Activated CD8-positive, alpha-beta T cell treated with anti-CD3 and anti-CD28 coated beads for 36 hours (primary cell): ENCODE measurements at regions of chr4 and their contacts with region 1.

Region 1: DNA sequence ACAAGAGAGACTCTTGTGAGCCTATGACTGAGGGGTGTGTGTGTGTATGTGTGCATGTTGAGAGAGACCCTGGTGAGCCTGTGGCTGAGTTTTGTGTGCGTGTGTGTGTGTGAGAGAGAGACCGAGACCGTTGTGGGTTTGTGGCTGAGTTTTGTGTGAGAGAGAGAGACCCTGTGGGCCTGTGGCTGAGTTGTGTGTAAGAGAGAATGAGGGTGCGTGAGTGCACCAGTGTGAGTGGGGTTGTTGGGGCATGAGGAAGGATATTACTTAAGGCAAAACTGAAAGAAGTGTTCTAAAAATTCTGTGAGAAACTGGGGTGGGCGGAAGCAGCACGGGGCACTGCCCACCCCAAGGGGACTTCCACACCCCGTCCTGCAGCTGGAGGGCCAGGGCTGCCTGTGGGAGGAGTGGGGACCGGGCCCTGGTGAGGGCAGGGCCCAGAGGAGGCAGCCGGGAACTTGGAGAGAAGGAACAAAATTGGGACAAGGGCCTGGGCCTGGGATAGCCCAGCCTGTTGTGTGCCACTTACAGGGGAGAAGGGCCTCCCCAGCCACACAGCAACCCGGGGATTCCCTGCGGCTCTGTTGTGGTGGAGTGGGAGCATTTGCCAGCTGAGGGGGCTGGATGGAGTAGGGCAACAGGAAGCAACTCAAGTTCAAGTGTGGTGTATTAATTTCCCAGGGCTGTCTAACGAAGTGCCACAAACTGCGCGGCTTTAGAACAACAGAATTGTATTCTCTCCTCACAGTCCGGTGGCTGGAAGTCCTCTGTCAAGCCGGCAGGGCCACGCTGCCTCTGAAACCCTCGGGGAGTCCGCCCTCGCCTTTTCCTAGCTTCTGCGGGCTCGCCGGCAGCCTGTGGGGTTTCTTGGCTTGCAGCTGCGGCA is 22.1 kb downstream of the TMEM131L start:
- DNase-seq: peak; percentile 91
- ATAC-seq: peak; percentile 64
- H3K4me3 Mint-ChIP-seq: peak overlapping the region; percentile 69
- H3K27ac Mint-ChIP-seq: peak overlapping the region; percentile 95
- H3K4me1 Mint-ChIP-seq: peaks cover 64% of the 10 kb centered on the region
- H3K27me3 Mint-ChIP-seq: no peaks in the 10 kb centered on the region
- CTCF ChIP-seq: no peak

Region 2: GRCh38 chr4:153257151-153257620 is 231.1 kb before region 1 on chr4:
- CTCF ChIA-PET with region 1: no interaction called
- POLR2A ChIA-PET with region 1: no interaction called
- intact Hi-C with region 1: no loop called
- DNase-seq: peak; percentile 61
- ATAC-seq: peak; percentile 58
- H3K4me3 Mint-ChIP-seq: no peak overlapping the region
- H3K27ac Mint-ChIP-seq: no peak overlapping the region
- H3K4me1 Mint-ChIP-seq: no peaks in the 10 kb centered on the region
- H3K27me3 Mint-ChIP-seq: peaks cover 8% of the 10 kb centered on the region
- CTCF ChIP-seq: no peak

Region 3: GRCh38 chr4:153432968-153433753 is 55.1 kb before region 1 on chr4:
- CTCF ChIA-PET with region 1: interaction called, 6 read pairs
- POLR2A ChIA-PET with region 1: interaction called, 4 read pairs
- intact Hi-C with region 1: loop called (anchors 5 kb)
- DNase-seq: peak; percentile 91
- ATAC-seq: peak; percentile 86
- H3K4me3 Mint-ChIP-seq: peak overlapping the region; percentile 80
- H3K27ac Mint-ChIP-seq: peak overlapping the region; percentile 97
- H3K4me1 Mint-ChIP-seq: peaks cover 72% of the 10 kb centered on the region
- H3K27me3 Mint-ChIP-seq: no peaks in the 10 kb centered on the region
- CTCF ChIP-seq: peak; percentile 82

Region 4: GRCh38 chr4:153497988-153498967 is 10.0 kb after region 1 on chr4:
- CTCF ChIA-PET with region 1: interaction called, 6 read pairs
- POLR2A ChIA-PET with region 1: interaction called, 26 read pairs
- intact Hi-C with region 1: loop called (anchors 1 kb)
- DNase-seq: peak; percentile 43
- ATAC-seq: peak; percentile 21
- H3K4me3 Mint-ChIP-seq: peak overlapping the region; percentile 75
- H3K27ac Mint-ChIP-seq: peak overlapping the region; percentile 97
- H3K4me1 Mint-ChIP-seq: peaks cover 92% of the 10 kb centered on the region
- H3K27me3 Mint-ChIP-seq: no peaks in the 10 kb centered on the region
- CTCF ChIP-seq: no peak

Region 5: GRCh38 chr4:153535772-153536513 is 47.7 kb after region 1 on chr4:
- CTCF ChIA-PET with region 1: interaction called, 9 read pairs
- POLR2A ChIA-PET with region 1: interaction called, 16 read pairs
- intact Hi-C with region 1: no loop called
- DNase-seq: no peak
- ATAC-seq: no peak
- H3K4me3 Mint-ChIP-seq: no peak overlapping the region
- H3K27ac Mint-ChIP-seq: peak overlapping the region; percentile 83
- H3K4me1 Mint-ChIP-seq: peaks cover 80% of the 10 kb centered on the region
- H3K27me3 Mint-ChIP-seq: no peaks in the 10 kb centered on the region
- CTCF ChIP-seq: no peak

Region 6: DNA sequence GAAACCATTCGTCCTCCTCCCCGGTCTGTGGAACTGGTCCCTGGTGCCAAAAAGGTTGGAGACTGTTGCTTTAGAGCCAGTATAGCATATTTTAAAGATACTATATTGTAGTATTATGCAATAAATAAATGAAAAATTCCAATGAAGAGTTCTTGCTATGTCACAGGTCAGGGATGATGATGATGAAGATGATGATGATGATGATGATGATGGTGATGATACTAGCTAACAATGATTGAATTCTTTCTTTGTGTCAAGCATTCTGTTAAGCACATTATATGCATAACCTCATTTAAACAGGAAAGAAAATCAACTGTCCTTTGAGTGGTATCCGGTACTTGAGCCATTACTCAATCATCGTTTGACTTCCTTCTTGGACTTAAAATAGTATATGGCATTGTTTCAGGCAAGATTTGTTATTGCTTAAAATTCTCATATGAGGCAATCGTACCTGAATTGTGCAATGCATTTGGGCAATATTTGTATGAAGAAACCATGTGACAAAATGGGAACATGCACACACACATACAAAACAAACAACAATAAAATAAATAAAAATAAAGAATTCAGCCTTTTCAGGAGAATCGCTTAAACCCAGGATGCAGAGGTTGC is 173.1 kb after region 1 on chr4:
- CTCF ChIA-PET with region 1: no interaction called
- POLR2A ChIA-PET with region 1: no interaction called
- intact Hi-C with region 1: no loop called
- DNase-seq: no peak
- ATAC-seq: no peak
- H3K4me3 Mint-ChIP-seq: no peak overlapping the region
- H3K27ac Mint-ChIP-seq: no peak overlapping the region
- H3K4me1 Mint-ChIP-seq: no peaks in the 10 kb centered on the region
- H3K27me3 Mint-ChIP-seq: no peaks in the 10 kb centered on the region
- CTCF ChIP-seq: no peak